ENCODE measurements at regions of chr10 and their contacts with region 1.

Region 1: GRCh38 chr10:103966671-103967447 is at the start of gene SLK:
- DNase-seq: peak; percentile 85
- H3K4me3 ChIP-seq: peak within 1 kb of the TSS; percentile 83 to 96 (median 94)
- H3K27ac ChIP-seq: peak within 1 kb of the TSS; percentile 98 to 99 (median 98)
- H3K4me1 ChIP-seq: peaks cover 0 to 37% (median 29%) of the 10 kb centered on the region in 4 donors
- H3K27me3 ChIP-seq: no peaks in the 10 kb centered on the region
- CTCF ChIP-seq: no peak
- EP300 ChIP-seq: no peak
- POLR2A ChIP-seq: peak; percentile 72
- total RNA-seq, gene SLK: 33.2 to 76.4 (median 55.7) TPM

Region 2: DNA sequence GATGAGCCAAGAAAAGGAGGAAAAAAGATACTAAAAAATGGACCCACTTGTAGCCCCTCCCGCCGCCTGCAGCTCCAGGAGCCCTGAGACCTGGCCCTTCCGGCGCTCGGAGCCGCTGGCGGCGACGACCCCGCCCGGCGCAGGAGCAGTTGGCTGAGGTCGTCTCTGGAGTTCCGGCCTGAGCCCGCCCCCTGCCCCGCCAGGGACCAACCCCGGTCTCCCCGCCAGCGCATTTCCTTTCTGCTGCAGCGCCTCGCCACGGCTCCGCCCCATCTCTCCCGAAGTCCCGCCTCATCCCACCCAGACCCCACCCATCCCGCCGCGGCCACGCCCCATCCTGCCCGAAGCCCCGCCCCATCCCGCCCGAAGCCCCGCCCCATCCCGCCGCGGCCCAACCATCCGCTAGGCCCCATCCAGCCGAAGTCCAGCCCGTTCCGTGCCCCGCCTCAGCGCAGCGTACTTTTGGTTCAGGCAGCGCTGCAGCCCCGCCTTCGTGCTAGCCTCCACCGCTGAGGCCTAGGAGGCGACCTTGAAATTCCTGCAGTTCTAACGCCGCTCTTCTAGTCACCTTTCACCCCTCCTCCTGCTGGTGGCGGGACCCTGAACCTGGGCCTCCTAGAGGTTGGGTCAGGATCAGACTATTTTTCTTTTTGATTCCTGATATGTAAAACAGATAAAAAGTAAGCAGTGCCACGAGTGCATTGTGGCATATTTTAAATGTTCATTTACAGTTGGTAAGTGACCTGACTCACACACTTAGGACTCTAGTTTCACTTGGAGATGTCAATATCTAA is 48.6 kb before region 1 on chr10 and contains the start of gene STN1:
- in situ Hi-C with region 1: loop called in 1 of 4 experiments (anchors 10 kb)
- intact Hi-C with region 1: loop called (anchors 2 kb)
- DNase-seq: peak; percentile 98
- H3K4me3 ChIP-seq: peak within 1 kb of the TSS; percentile 45 to 83 (median 62)
- H3K27ac ChIP-seq: peak within 1 kb of the TSS; percentile 90 to 99 (median 96)
- H3K4me1 ChIP-seq: peaks cover 9 to 53% (median 32%) of the 10 kb centered on the region in 4 donors
- H3K27me3 ChIP-seq: no peaks in the 10 kb centered on the region
- CTCF ChIP-seq: peak in 2 of 5 experiments; percentile 32 to 33
- EP300 ChIP-seq: no peak
- POLR2A ChIP-seq: peak; percentile 99
- total RNA-seq, gene STN1: 20.8 to 31.8 (median 26.4) TPM

Measured in transverse colon (tissue), 4 donors.